PC-9 (cell line): ENCODE measurements at regions of chr3 and their contacts with region 1.

Region 1: DNA sequence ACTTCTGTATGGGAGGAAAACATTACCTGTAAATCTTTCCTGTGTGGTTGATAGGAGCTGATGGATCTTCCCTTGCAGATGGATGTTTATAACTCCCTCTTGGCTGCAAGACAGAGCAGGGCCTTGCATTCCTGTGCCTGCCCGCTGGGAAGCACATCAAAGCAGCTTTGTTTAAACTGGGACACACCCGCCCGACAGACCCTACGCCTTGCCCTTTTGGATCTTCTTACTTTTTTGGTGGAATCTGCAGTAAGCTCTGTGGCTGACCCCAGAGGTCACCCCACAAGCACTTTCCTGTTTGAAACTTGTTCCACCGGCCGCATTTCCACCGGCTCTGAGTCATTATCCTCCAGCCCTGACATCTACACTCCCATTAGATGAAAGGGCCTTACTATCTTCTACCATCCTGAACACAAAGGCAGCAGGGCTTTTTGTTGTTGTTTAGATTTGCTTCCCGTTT is 244.1 kb upstream of the STT3B start:
- DNase-seq: peak; percentile 90 to 91
- H3K4me3 ChIP-seq: no peak overlapping the region
- H3K27ac ChIP-seq: peak overlapping the region; percentile 66
- H3K4me1 ChIP-seq: peaks cover 46% of the 10 kb centered on the region
- H3K27me3 ChIP-seq: no peaks in the 10 kb centered on the region
- CTCF ChIP-seq: no peak

Region 2: DNA sequence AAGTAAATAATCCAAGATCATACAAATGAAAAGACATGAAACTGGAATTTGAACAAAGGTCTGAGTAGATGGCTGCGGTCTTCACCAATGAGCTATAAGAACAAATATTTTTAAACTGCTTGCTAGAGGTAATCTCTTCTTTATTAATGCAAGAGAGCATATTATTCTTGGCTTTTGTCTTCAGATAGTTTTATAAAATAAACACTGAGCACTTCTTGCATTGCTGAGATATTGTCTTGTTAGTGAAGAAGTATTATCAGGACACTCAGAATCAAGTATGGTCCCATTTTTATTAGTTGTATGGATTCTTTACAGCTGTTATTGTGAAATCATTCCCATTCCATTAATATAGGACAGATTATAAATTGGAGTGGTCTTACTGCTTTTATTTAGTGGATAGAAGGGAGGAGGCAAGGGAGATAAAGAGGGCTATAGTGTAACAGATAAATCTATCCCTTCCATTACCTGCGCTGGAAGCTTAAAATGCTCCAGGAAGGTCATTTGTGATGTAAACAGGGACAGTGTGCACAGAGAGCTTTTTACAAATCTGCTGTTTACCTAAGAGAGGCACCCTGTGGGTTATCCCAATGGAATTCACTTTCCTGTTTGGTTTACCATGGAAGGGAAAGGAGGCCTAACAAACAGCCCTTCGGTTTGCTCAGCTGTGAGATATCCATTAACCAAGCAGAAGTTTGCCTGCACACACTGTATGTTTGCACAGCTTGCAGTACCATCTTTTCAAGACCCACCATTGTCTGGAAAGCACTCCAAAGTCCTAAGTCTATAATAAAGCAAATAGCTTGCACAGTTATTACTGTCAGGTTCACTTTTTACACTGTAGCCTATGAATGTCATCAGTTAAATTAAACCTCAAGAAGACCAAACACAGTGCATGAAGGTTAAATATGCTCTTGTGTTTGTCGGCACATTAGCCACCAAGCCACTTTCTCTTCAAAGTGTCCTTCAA is 1030.0 kb before region 1 on chr3:
- CTCF ChIA-PET with region 1: no interaction called
- POLR2A ChIA-PET with region 1: no interaction called
- intact Hi-C with region 1: no loop called
- DNase-seq: no peak
- H3K4me3 ChIP-seq: no peak overlapping the region
- H3K27ac ChIP-seq: no peak overlapping the region
- H3K4me1 ChIP-seq: 0 out of 2 replicates have a peak, but pooled peaks cover 7% of the 10 kb centered on the region
- H3K27me3 ChIP-seq: no peaks in the 10 kb centered on the region
- CTCF ChIP-seq: no peak

Region 3: DNA sequence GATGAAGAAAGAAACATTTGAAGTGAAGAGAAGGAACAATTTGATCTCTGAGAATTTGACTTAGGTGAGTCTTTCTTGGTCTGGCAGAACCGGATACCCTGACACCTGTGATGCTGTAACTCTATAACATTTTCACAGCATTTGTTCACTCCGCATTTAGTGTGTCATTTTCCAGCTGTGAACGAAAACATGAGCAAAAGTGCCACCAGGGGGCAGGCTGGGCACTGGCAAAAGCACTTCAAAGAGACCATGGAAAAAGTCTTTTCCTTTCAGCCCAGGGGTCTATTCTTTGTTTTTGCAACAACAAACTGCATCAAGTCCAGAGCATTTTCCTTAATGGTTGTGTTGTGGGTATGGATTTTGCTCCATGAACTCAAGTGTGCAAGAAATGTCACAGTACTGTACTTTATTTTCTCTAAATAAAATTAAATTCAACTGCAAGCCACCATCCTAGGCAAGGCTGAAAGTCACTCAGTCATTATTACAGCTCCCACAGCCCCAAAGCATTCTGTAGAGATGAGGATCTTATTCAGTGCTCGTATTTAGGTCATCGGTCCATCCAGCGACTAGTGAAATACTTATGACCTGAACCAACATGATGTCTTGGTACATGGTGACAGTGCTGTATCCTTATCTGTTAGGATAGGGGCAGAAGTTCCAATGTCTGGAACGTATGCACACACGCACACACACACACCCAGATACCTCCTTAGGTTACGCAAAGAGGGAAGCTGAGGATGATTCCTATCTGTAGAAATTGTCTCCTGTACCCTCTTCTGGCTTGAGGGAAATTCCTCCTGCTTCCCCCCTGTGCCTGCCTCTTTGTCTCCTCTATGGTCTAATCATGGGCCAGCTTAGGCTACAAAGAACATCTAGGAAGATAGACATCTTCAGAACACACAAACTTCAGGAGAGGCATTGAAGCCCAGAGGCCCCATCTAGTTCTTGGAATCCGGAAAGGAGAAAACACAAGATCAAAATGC is 519.7 kb before region 1 on chr3:
- CTCF ChIA-PET with region 1: no interaction called
- POLR2A ChIA-PET with region 1: no interaction called
- intact Hi-C with region 1: loop called (anchors 5 kb)
- DNase-seq: peak in 1 of 2 experiments; percentile 61
- H3K4me3 ChIP-seq: no peak overlapping the region
- H3K27ac ChIP-seq: no peak overlapping the region
- H3K4me1 ChIP-seq: peaks cover 6% of the 10 kb centered on the region
- H3K27me3 ChIP-seq: no peaks in the 10 kb centered on the region
- CTCF ChIP-seq: peak; percentile 73

Region 4: GRCh38 chr3:31077021-31077601 is 211.6 kb before region 1 on chr3:
- CTCF ChIA-PET with region 1: no interaction called
- POLR2A ChIA-PET with region 1: no interaction called
- intact Hi-C with region 1: loop called (anchors 5 kb)
- DNase-seq: peak; percentile 62 to 86
- H3K4me3 ChIP-seq: no peak overlapping the region
- H3K27ac ChIP-seq: peak overlapping the region; percentile 67
- H3K4me1 ChIP-seq: peaks cover 13% of the 10 kb centered on the region
- H3K27me3 ChIP-seq: no peaks in the 10 kb centered on the region
- CTCF ChIP-seq: no peak

Region 5: DNA sequence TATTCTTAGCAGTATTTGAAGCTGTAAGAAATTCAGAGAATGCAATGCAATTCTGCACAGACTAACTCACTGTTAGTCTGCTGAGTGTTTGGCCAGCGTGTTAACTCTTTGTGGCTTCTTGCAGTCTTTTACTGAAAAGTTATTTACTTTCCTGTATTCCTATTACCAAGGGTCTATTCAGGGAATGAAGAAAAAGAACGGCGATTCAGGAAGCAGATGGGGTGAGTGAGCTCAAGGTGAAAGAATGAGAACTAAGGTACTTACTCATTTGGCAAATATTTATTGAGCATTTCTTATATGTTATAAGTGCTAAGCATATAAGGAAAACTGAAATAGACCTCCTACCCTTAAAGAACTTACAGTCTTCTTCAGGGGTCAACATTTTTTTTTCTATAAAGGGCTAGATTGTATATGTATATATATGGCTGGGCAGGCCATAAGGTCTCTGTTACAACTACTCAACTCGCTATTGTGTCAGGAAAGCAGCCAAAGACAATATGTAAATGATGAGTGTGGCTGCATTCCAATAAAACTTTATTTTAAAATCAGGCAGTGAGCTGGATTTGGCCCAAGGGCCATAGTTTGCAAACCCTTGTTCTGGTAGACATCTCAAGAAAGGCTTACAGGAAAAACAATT is 122.3 kb before region 1 on chr3:
- CTCF ChIA-PET with region 1: no interaction called
- POLR2A ChIA-PET with region 1: no interaction called
- intact Hi-C with region 1: loop called (anchors 1 kb)
- DNase-seq: peak; percentile 35 to 83
- H3K4me3 ChIP-seq: no peak overlapping the region
- H3K27ac ChIP-seq: peak overlapping the region; percentile 57
- H3K4me1 ChIP-seq: peaks cover 20% of the 10 kb centered on the region
- H3K27me3 ChIP-seq: no peaks in the 10 kb centered on the region
- CTCF ChIP-seq: no peak

Region 6: GRCh38 chr3:31275038-31275562 is 13.6 kb before region 1 on chr3:
- CTCF ChIA-PET with region 1: no interaction called
- POLR2A ChIA-PET with region 1: no interaction called
- intact Hi-C with region 1: loop called (anchors 1 kb)
- DNase-seq: peak; percentile 29 to 83
- H3K4me3 ChIP-seq: peak overlapping the region; percentile 32; the same call in 1 of the 2 replicates
- H3K27ac ChIP-seq: peak overlapping the region; percentile 83
- H3K4me1 ChIP-seq: peaks cover 42% of the 10 kb centered on the region
- H3K27me3 ChIP-seq: no peaks in the 10 kb centered on the region
- CTCF ChIP-seq: no peak

Region 7: DNA sequence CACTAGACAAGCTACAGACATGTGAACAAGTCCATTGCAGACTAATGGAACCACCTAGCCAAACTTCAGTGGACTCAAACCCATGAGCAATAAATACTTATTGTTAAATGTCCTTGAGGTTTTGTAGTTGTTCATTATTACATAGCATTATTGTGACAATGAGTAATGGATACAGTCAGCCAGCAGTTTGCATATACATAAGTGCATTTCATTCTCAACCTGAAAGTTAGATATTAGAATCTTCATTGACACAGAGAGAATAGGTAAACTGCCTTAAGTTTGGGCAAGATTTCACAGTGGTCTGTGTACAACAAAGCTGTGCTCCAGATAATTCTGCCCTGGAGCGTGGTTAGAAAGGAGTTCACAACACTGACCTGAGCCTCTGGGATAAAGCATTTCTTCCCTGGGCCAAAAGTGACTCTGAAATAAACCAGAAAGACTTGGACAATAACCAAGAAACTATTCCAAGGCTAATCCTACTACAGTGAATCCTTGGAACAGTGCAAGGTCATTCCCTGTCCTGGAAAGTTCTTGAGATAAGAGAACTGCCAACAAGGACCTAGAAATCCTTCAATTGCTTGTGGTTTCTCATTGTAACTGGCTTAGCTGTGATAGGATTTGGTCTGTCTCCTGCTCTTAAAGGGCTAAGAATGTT is 18.6 kb after region 1 on chr3:
- CTCF ChIA-PET with region 1: no interaction called
- POLR2A ChIA-PET with region 1: no interaction called
- intact Hi-C with region 1: loop called (anchors 1 kb)
- DNase-seq: no peak
- H3K4me3 ChIP-seq: no peak overlapping the region
- H3K27ac ChIP-seq: no peak overlapping the region
- H3K4me1 ChIP-seq: peaks cover 9% of the 10 kb centered on the region
- H3K27me3 ChIP-seq: no peaks in the 10 kb centered on the region
- CTCF ChIP-seq: no peak

Region 8: DNA sequence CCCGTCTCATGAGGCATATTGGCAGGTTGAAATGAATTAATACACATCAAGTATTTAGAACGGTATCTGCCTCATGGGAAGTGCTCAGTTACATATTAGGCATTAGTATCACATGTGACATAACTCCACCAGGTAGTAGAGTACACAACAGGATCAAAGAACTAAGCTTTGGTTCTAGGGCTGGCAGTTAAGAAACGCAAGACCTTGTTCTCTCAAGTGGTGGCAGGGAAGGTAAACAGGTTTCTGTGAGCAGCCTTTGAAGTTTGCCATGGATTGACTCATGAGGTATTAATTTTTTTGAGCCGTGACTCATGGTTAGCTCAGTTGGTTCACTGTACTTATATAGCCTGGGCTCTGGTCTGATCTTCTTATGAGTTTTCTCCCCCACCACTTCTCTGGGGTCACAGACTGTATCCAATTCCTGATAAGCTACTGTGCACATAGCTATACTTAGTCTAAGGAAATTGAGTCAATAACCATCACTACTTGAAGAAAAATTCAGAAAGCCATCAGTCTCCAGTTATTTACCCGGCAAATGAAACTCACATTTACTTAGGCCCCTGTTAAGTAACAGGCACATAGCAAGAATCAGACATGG is 88.5 kb after region 1 on chr3:
- CTCF ChIA-PET with region 1: no interaction called
- POLR2A ChIA-PET with region 1: interaction called, 5 read pairs
- intact Hi-C with region 1: loop called (anchors 5 kb)
- DNase-seq: peak; percentile 46 to 88
- H3K4me3 ChIP-seq: no peak overlapping the region
- H3K27ac ChIP-seq: peak overlapping the region; percentile 71
- H3K4me1 ChIP-seq: peaks cover 17% of the 10 kb centered on the region
- H3K27me3 ChIP-seq: no peaks in the 10 kb centered on the region
- CTCF ChIP-seq: no peak

Region 9: DNA sequence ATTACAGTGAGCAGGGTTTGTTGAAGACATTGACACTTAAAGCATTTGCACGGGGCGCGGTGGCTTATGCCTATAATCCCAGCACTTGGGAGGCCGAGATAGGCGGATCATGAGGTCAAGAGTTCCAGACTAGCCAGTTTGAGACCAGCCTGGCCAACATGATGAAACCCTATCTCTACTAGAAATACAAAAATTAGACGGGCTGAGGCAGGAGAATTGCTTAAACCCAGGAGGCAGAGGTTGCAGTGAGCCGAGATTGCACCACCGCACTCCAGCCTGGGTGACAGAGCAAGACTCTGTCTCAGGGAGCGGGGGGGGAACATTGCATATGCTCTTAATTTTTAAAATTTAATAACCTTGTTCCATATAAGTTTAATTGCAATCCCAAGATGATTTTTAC is 256.0 kb after region 1 on chr3:
- CTCF ChIA-PET with region 1: no interaction called
- POLR2A ChIA-PET with region 1: no interaction called
- intact Hi-C with region 1: no loop called
- DNase-seq: no peak
- H3K4me3 ChIP-seq: no peak overlapping the region
- H3K27ac ChIP-seq: no peak overlapping the region
- H3K4me1 ChIP-seq: no peaks in the 10 kb centered on the region
- H3K27me3 ChIP-seq: no peaks in the 10 kb centered on the region
- CTCF ChIP-seq: no peak